Psoas muscle (tissue), 8 donors: ENCODE measurements at regions of chrX and their contacts with region 1.

Region 1: GRCh38 chrX:100685284-100685996 is 41.4 kb downstream of the SRPX2 start:
- DNase-seq: no peak
- ATAC-seq: peak in 3 of 4 donors; percentile 63 to 74 (median 68)
- H3K4me3 ChIP-seq: no peak overlapping the region
- H3K27ac ChIP-seq: no peak overlapping the region
- H3K4me1 ChIP-seq: no peaks in the 10 kb centered on the region
- H3K27me3 ChIP-seq: peaks cover 0 to 7% (median 0%) of the 10 kb centered on the region in 3 donors
- CTCF ChIP-seq: peak; percentile 72

Region 2: GRCh38 chrX:100700809-100701208 is 15.4 kb after region 1 on chrX:
- intact Hi-C with region 1: no loop called
- DNase-seq: no peak
- ATAC-seq: no peak
- H3K4me3 ChIP-seq: no peak overlapping the region
- H3K27ac ChIP-seq: no peak overlapping the region
- H3K4me1 ChIP-seq: no peaks in the 10 kb centered on the region
- H3K27me3 ChIP-seq: no peaks in the 10 kb centered on the region
- CTCF ChIP-seq: no peak

Region 3: GRCh38 chrX:100768679-100769338 is 83.4 kb after region 1 on chrX:
- intact Hi-C with region 1: loop called in 1 of 2 experiments (anchors 5 kb)
- DNase-seq: peak; percentile 73 to 85
- ATAC-seq: peak in 2 of 4 donors; percentile 44 to 64
- H3K4me3 ChIP-seq: no peak overlapping the region
- H3K27ac ChIP-seq: no peak overlapping the region
- H3K4me1 ChIP-seq: no peaks in the 10 kb centered on the region
- H3K27me3 ChIP-seq: no peaks in the 10 kb centered on the region
- CTCF ChIP-seq: peak; percentile 89

Region 4: GRCh38 chrX:101287402-101287801 is 602.0 kb after region 1 on chrX:
- intact Hi-C with region 1: loop called in 1 of 2 experiments (anchors 10 kb)
- DNase-seq: no peak
- ATAC-seq: no peak
- H3K4me3 ChIP-seq: no peak overlapping the region
- H3K27ac ChIP-seq: no peak overlapping the region
- H3K4me1 ChIP-seq: no peaks in the 10 kb centered on the region
- H3K27me3 ChIP-seq: peaks cover 0 to 20% (median 6%) of the 10 kb centered on the region in 3 donors
- CTCF ChIP-seq: peak; percentile 56